Motor neuron (in vitro differentiated cells): ENCODE measurements at regions of chr6 and their contacts with region 1.

Region 1: GRCh38 chr6:123415844-123416468 is 220.8 kb downstream of the TRDN start:
- ATAC-seq: peak; percentile 38 to 71 (median 64)
- H3K4me3 ChIP-seq: no peak overlapping the region
- H3K27ac ChIP-seq: no peak overlapping the region
- H3K4me1 ChIP-seq: peaks cover 6 to 18% of the 10 kb centered on the region in 2 donors

Region 2: DNA sequence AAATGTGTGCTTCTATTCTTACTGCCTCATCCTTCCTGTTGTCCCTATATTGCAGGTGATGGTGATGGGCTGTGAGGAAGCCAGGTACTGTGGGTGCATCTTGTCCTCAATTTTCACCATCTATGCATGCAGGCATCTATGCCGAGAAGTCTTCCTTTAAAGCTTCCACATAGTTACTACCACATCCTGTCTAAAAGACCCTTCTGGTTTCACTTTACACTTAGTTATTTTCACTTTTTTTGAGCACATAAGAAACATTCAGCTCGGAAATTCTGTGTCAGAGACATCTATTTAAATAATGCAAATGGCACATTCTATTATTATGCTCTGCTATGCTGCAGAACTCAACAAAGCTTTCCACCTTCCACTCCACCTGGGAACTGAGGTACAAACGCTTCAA is 664.6 kb before region 1 on chr6:
- in situ Hi-C with region 1: no loop called
- ATAC-seq: peak in 3 of 8 experiments; percentile 50 to 75 (median 70)
- H3K4me3 ChIP-seq: no peak overlapping the region
- H3K27ac ChIP-seq: no peak overlapping the region
- H3K4me1 ChIP-seq: no peaks in the 10 kb centered on the region

Region 3: GRCh38 chr6:123715006-123715875 is 299.3 kb after region 1 on chr6:
- in situ Hi-C with region 1: loop called in 4 of 9 experiments (anchors 10 to 25 kb)
- ATAC-seq: peak in 6 of 8 experiments; percentile 19 to 50 (median 34)
- H3K4me3 ChIP-seq: no peak overlapping the region
- H3K27ac ChIP-seq: no peak overlapping the region
- H3K4me1 ChIP-seq: no peaks in the 10 kb centered on the region